ENCODE measurements at regions of chr14 and their contacts with region 1.

Region 1: DNA sequence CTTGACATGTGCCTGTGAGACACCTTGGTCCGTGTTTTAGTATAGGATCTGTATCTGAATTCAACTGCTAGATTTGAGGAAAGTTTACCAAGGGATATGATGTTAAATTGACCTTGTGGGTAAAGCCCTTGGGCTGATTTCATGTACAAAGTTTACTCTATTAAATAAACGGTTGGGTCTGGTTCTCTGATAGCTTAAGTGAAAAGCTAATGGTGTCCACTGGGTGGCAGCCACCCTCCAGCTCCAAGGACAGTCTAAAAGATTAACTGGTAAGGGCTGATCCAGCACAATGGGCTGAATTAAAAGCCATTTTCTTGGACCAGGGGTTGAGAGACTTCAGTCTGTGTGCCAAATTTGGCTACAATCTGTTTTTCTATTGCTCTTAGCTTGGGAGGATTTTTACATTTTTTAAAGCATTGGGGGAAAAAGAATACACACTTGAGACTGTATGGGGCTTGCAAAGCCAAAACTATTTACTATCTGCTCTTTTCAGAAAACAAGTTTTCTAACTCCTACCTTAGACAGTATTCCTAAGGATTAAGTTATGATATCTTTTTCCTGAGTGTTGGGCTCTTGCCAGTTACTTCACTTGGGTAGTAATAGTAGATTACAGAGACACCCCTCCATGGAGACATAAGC is 116.5 kb downstream of the GPHN start:
- DNase-seq: peak; percentile 68
- H3K4me3 Mint-ChIP-seq: no peak overlapping the region
- H3K27ac Mint-ChIP-seq: no peak overlapping the region
- H3K4me1 Mint-ChIP-seq: peaks cover 10% of the 10 kb centered on the region
- H3K27me3 Mint-ChIP-seq: no peaks in the 10 kb centered on the region
- CTCF ChIP-seq: peak; percentile 63

Region 2: DNA sequence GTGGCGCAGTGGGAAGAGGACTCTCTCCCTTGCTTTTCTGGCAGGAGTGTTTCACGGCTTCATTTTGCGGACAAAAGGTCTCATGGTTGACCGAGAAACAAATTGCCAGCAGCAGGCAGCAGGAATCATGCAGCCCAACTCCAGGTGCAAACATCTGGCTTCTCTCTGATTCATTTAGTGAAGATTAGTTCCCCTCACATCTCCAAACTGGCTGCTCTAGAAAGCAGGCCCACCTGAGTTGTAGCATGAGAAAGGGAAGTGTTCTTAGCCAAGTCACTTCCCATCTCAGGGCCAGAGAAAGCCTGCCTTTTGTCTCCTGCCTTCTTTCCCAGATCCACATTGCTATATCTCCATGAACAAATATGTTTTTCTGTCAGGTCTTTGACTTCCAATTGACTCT is 259.0 kb before region 1 on chr14:
- CTCF ChIA-PET with region 1: no interaction called
- POLR2A ChIA-PET with region 1: no interaction called
- intact Hi-C with region 1: no loop called
- DNase-seq: no peak
- H3K4me3 Mint-ChIP-seq: no peak overlapping the region
- H3K27ac Mint-ChIP-seq: no peak overlapping the region
- H3K4me1 Mint-ChIP-seq: no peaks in the 10 kb centered on the region
- H3K27me3 Mint-ChIP-seq: no peaks in the 10 kb centered on the region
- CTCF ChIP-seq: no peak

Region 3: GRCh38 chr14:66495218-66496098 is 129.0 kb before region 1 on chr14:
- CTCF ChIA-PET with region 1: interaction called, 9 read pairs
- POLR2A ChIA-PET with region 1: no interaction called
- intact Hi-C with region 1: loop called (anchors 10 kb)
- DNase-seq: peak; percentile 69
- H3K4me3 Mint-ChIP-seq: no peak overlapping the region
- H3K27ac Mint-ChIP-seq: no peak overlapping the region
- H3K4me1 Mint-ChIP-seq: no peaks in the 10 kb centered on the region
- H3K27me3 Mint-ChIP-seq: no peaks in the 10 kb centered on the region
- CTCF ChIP-seq: peak; percentile 58

Region 4: DNA sequence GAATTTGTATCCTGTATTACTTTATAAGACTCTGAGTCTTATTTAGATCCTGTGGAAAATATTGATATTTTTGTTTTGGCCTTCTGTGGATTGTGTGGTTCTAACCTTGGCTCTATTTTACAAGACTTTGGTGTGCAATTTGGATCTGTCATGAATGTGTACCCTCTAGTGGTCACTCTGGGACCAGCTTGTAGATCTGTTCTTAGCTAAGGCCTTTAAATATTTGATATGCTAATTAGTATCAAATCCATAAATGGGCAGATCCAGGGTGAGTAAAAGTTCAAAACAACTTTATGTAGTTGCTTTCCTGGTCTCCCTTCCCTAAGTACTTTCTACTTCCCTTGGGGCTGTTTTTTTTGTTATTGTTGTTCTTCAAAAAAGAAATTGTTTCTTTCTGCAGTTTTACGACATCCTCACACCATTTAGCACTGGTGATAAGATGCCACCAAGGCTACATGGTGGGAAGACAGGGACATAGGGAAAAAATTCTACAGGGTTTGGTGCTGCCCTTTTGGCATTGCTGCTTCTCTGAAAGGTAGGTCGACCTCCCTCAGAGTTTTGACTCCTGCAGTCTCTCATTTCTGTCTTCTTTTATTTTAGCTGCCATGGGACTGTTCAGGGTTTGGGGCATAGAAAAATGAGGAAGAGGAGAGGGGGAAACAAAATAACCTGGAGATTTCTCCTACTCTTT is 122.0 kb after region 1 on chr14:
- CTCF ChIA-PET with region 1: interaction called, 5 read pairs
- POLR2A ChIA-PET with region 1: no interaction called
- intact Hi-C with region 1: loop called (anchors 2 kb)
- DNase-seq: peak; percentile 54
- H3K4me3 Mint-ChIP-seq: no peak overlapping the region
- H3K27ac Mint-ChIP-seq: no peak overlapping the region
- H3K4me1 Mint-ChIP-seq: no peaks in the 10 kb centered on the region
- H3K27me3 Mint-ChIP-seq: no peaks in the 10 kb centered on the region
- CTCF ChIP-seq: peak; percentile 57

Region 5: GRCh38 chr14:67137744-67138371 is 513.4 kb after region 1 on chr14:
- CTCF ChIA-PET with region 1: interaction called, 8 read pairs
- POLR2A ChIA-PET with region 1: no interaction called
- intact Hi-C with region 1: loop called (anchors 1 kb)
- DNase-seq: peak; percentile 20
- H3K4me3 Mint-ChIP-seq: no peak overlapping the region
- H3K27ac Mint-ChIP-seq: no peak overlapping the region
- H3K4me1 Mint-ChIP-seq: no peaks in the 10 kb centered on the region
- H3K27me3 Mint-ChIP-seq: no peaks in the 10 kb centered on the region
- CTCF ChIP-seq: peak; percentile 39

Region 6: DNA sequence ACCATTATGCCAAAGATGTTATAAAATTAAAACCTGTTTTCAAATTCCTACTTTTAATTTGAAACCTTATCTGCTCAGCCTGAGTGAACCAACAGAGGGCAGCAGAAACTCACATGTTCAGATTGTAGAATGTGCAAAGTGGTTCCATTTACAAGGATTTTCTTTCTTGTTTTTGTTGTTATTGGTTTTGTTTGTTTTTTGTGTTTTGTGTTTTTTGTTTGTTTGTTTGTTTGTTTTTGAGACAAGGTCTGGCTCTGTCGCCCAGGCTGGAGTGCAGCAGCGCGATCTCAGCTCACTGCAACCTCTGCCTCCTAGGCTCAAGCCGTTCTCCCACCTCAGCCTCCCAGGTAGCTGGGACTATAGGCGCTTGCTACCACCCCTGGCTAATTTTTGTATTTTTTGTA is 542.0 kb after region 1 on chr14:
- CTCF ChIA-PET with region 1: interaction called, 10 read pairs
- POLR2A ChIA-PET with region 1: interaction called, 3 read pairs
- intact Hi-C with region 1: loop called (anchors 1 kb)
- DNase-seq: peak; percentile 62
- H3K4me3 Mint-ChIP-seq: no peak overlapping the region
- H3K27ac Mint-ChIP-seq: no peak overlapping the region
- H3K4me1 Mint-ChIP-seq: peaks cover 8% of the 10 kb centered on the region
- H3K27me3 Mint-ChIP-seq: no peaks in the 10 kb centered on the region
- CTCF ChIP-seq: peak; percentile 79

Region 7: DNA sequence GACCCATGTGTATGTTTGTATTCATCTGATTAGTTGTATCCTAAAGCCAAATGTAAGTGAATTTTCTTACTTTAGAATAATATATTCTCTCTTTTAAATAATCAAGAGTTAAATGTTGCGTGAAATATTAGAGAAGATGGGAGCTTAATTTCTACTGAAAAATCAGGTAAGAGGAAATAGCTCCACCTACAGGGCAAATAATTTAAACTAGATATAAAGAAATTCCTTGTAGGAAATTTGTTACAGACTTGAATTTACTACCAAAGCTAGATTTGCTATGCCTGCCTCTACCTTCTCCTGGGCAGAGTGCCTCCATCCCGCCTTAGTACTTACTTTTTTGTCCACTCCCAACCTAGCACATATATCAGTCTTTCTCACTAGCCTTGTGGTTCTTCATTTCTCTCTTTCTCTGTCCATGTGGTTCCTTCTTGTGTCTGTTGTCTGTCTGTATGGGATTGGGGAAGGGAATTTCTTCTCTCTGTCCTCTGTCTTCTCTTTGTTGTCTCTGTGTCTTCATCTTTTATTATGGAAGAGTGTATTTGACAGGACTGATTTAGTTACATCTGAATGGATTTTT is 661.5 kb after region 1 on chr14:
- CTCF ChIA-PET with region 1: no interaction called
- POLR2A ChIA-PET with region 1: no interaction called
- intact Hi-C with region 1: loop called (anchors 5 kb)
- DNase-seq: peak; percentile 45
- H3K4me3 Mint-ChIP-seq: no peak overlapping the region
- H3K27ac Mint-ChIP-seq: no peak overlapping the region
- H3K4me1 Mint-ChIP-seq: peaks cover 6% of the 10 kb centered on the region
- H3K27me3 Mint-ChIP-seq: no peaks in the 10 kb centered on the region
- CTCF ChIP-seq: peak; percentile 55